CD4-positive, alpha-beta T cell (primary cell): ENCODE measurements at regions of chr4 and their contacts with region 1.

Region 1: GRCh38 chr4:96844858-96845490 is 1005.1 kb downstream of the PDHA2 start:
- DNase-seq: no peak
- ATAC-seq: no peak
- H3K4me3 ChIP-seq: no peak overlapping the region
- H3K4me3 Mint-ChIP-seq: no peak overlapping the region
- H3K27ac ChIP-seq: no peak overlapping the region
- H3K27ac Mint-ChIP-seq: no peak overlapping the region
- H3K4me1 ChIP-seq: no peaks in the 10 kb centered on the region
- H3K4me1 Mint-ChIP-seq: no peaks in the 10 kb centered on the region
- H3K27me3 ChIP-seq: no peaks in the 10 kb centered on the region
- H3K27me3 Mint-ChIP-seq: no peaks in the 10 kb centered on the region
- CTCF ChIP-seq: no peak

Region 2: DNA sequence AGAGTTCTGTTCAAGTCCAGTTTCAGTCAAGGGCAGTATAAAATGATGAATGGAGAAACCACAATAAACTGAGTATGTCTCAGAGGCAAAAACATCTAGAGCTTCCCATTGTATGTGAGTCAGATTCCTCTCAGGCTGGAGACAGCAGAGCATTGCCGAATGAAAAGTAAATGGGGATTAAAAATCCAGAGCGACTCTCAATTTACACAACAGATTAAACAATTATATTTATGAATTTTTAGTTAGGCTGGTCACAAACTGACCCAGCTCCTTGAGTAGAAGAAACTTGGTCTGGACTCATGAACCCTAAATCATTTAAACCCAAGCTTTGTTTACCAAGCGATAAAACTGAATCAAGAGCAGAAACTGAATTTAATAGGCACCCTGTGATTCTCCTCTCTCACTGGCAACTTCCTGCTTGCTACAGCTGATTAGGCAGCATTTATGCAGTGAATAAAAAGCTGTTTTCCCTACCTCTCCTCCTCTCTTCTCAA is 437.2 kb before region 1 on chr4:
- CTCF ChIA-PET with region 1: no interaction called
- POLR2A ChIA-PET with region 1: no interaction called
- intact Hi-C with region 1: loop called in 1 of 2 experiments (anchors 10 kb)
- DNase-seq: no peak
- ATAC-seq: no peak
- H3K4me3 ChIP-seq: no peak overlapping the region
- H3K4me3 Mint-ChIP-seq: no peak overlapping the region
- H3K27ac ChIP-seq: no peak overlapping the region
- H3K27ac Mint-ChIP-seq: no peak overlapping the region
- H3K4me1 ChIP-seq: no peaks in the 10 kb centered on the region
- H3K4me1 Mint-ChIP-seq: no peaks in the 10 kb centered on the region
- H3K27me3 ChIP-seq: no peaks in the 10 kb centered on the region
- H3K27me3 Mint-ChIP-seq: no peaks in the 10 kb centered on the region
- CTCF ChIP-seq: no peak